ENCODE measurements at regions of chr4 and their contacts with region 1.

Region 1: GRCh38 chr4:128809477-128810330 is at the start of gene JADE1:
- DNase-seq: peak; percentile 67 to 96
- H3K4me3 ChIP-seq: peak within 1 kb of the TSS; percentile 79 to 94
- H3K27ac ChIP-seq: peak within 1 kb of the TSS; percentile 91 to 94
- H3K4me1 ChIP-seq: no peaks in the 10 kb centered on the region
- H3K27me3 ChIP-seq: no peaks in the 10 kb centered on the region
- CTCF ChIP-seq: peak; percentile 50 to 65 (median 52)
- total RNA-seq, gene JADE1: 33.8 TPM

Region 2: DNA sequence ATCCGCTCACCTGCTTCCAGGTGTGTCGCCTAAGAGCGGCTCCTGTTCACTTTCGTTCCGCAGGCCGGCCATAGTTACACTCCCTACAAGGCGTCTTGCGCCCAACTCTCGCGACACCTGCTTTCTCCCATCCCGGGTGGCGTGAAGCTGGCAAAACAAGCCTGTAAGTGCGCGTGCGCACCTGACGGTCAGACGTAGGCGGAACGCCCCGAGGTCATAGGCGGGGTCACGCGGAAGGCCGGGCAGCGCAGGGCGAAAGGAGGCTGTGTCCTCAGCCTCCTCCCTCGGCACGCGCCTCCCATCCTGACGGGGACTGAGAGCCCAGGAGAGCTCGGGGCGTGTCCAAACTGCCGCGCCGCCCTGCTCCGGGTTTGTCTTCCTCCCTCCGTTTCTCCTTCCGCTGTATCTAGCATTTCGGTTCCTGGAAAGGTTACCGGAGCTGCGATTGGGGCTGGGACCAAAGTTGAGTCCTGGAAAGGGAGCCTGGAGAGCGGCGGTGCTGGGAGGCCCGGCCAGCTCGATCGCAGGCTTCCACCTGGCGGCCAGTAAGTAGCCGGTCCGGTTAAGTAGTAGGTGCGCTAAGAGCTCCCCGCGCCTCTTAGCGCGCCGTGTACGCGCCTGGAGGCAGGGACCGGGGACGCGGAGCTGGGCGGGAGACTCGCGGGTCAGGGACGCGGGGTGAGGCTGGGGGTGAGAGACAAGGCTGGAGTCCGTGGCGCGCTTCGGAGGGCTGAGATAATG is 844.5 kb before region 1 on chr4 and contains the starts of genes ABHD18 and MFSD8:
- intact Hi-C with region 1: loop called (anchors 10 kb)
- DNase-seq: peak; percentile 98 to 99
- H3K4me3 ChIP-seq: peak within 1 kb of the TSS; percentile 71 to 86
- H3K27ac ChIP-seq: peak within 1 kb of the TSS; percentile 93 to 94
- H3K4me1 ChIP-seq: peaks cover 0 to 12% of the 10 kb centered on the region in 2 donors
- H3K27me3 ChIP-seq: no peaks in the 10 kb centered on the region
- CTCF ChIP-seq: peak; percentile 39 to 55 (median 46)
- total RNA-seq, gene ABHD18: 3.5 TPM
- total RNA-seq, gene MFSD8: 26.3 TPM

Region 3: DNA sequence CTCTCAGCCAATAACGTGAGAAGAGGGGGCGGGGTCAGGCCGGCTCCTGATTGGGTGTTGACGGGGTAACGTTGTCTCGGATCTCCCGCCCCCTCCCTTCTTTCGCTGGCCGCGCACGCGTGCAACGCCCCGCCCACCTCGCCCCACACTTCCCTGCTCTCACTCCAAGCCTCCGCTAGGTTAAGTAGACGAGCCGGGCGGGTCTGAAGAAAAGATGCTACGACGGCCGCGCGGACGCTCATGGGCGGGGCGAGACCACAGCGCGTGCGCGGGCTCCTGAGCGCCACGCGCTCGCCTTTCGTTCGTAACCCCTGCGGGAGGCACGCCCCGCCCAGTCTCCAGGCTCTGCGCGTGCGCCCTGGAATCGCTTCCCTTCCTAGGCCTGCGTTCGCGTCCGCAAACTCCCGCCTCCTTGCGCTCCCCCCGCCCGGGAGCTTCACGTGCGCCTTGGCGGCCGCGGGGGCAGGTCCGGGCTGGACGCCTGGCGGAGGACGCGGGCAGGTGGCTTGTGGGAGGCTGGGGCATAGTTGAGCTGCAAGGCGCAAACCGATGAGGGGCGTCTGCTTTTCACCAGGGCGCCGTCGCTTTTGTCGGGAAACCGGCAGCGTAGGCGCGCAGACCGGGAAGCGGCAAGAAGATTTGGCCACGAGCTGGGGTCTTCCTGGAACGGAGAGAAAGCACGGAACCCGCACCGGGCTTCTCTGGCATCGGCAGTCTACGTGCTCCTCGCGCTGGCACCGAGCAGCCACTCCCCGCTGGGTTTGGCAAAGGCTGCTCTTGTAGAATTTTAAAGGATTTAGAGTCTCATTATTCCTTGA is 521.6 kb before region 1 on chr4:
- intact Hi-C with region 1: loop called (anchors 1 kb)
- DNase-seq: peak; percentile 99 to 100
- H3K4me3 ChIP-seq: peak overlapping the region; percentile 91 to 93
- H3K27ac ChIP-seq: peak overlapping the region; percentile 92 to 93
- H3K4me1 ChIP-seq: peaks cover 0 to 11% of the 10 kb centered on the region in 2 donors
- H3K27me3 ChIP-seq: no peaks in the 10 kb centered on the region
- CTCF ChIP-seq: peak in 2 of 3 experiments; percentile 34 to 48

Region 4: GRCh38 chr4:128454281-128455075 is 355.2 kb before region 1 on chr4:
- intact Hi-C with region 1: loop called (anchors 1 kb)
- DNase-seq: peak; percentile 59 to 89
- H3K4me3 ChIP-seq: no peak overlapping the region
- H3K27ac ChIP-seq: no peak overlapping the region
- H3K4me1 ChIP-seq: peaks cover 0 to 10% of the 10 kb centered on the region in 2 donors
- H3K27me3 ChIP-seq: no peaks in the 10 kb centered on the region
- CTCF ChIP-seq: peak; percentile 68 to 85 (median 80)

Region 5: GRCh38 chr4:128517739-128518510 is 291.8 kb before region 1 on chr4:
- intact Hi-C with region 1: loop called (anchors 2 kb)
- DNase-seq: peak in 1 of 2 donors; percentile 87
- H3K4me3 ChIP-seq: no peak overlapping the region
- H3K27ac ChIP-seq: peak overlapping the region; percentile 84 to 88
- H3K4me1 ChIP-seq: peaks cover 6 to 49% of the 10 kb centered on the region in 2 donors
- H3K27me3 ChIP-seq: no peaks in the 10 kb centered on the region
- CTCF ChIP-seq: no peak

Region 6: DNA sequence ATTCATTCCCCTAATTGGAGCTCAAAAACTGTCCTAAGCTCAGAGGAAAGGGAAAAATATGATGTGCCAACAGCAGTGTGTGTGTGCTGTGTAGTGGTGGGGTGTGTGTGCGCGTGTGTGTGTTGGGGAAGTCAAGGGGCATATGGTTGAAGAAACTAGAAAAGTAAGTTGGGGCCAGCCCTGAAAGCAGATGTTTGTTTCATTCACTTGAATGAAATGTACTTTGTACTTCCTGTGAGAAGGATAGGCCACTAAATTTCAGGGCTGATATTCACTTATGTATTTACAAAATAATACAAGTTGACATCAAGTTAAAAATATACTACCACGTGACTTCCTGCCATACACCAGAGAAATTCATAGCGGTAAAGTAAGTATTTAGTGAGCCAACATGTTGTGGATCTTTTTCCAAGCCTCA is 151.5 kb before region 1 on chr4:
- intact Hi-C with region 1: loop called (anchors 2 kb)
- DNase-seq: no peak
- H3K4me3 ChIP-seq: no peak overlapping the region
- H3K27ac ChIP-seq: peak overlapping the region; percentile 81 to 86
- H3K4me1 ChIP-seq: peaks cover 3 to 39% of the 10 kb centered on the region in 2 donors
- H3K27me3 ChIP-seq: no peaks in the 10 kb centered on the region
- CTCF ChIP-seq: no peak

Region 7: DNA sequence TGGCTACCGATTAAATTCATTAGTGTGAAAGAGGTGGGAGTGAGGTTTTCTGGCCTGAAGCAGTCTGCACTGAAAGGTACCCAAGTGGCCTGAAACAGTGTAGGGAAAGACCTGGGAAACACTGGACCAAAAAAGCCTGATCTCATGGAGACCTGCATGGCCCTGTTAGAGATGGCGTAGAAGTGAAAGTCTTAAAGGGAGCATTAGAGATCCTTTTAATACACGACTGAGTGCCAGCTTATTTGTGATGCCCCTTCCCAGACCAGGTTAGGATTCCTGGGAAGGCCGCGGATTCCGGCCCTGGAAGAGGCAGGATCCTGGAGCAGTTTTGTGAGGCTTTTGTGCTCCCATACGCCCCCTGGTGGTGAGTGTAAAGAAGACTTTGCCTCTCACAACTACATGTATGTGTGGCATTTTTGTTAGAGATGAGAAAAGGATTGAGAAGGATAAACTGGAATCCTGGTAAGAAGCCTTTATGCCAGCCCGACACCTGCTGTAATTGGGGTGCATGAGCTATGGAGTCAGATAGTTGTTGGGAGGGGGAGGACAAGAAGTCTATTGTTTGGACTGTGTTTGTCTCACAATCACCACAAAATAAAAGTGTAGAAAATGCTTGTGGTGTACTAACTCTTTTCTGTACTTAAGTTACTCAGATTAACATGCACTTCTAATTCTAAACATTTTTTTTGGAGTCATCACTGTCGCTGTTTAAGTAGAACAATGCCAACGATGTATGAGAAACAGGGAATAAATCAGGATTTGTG is 53.8 kb after region 1 on chr4:
- intact Hi-C with region 1: loop called (anchors 2 kb)
- DNase-seq: peak in 1 of 2 donors; percentile 82
- H3K4me3 ChIP-seq: no peak overlapping the region
- H3K27ac ChIP-seq: peak overlapping the region; percentile 29 to 30
- H3K4me1 ChIP-seq: peaks cover 0 to 18% of the 10 kb centered on the region in 2 donors
- H3K27me3 ChIP-seq: no peaks in the 10 kb centered on the region
- CTCF ChIP-seq: peak; percentile 62 to 89 (median 75)

Measured in ascending aorta (tissue), 2 donors.